ENCODE measurements at regions of chr1 and their contacts with region 1.

Region 1: DNA sequence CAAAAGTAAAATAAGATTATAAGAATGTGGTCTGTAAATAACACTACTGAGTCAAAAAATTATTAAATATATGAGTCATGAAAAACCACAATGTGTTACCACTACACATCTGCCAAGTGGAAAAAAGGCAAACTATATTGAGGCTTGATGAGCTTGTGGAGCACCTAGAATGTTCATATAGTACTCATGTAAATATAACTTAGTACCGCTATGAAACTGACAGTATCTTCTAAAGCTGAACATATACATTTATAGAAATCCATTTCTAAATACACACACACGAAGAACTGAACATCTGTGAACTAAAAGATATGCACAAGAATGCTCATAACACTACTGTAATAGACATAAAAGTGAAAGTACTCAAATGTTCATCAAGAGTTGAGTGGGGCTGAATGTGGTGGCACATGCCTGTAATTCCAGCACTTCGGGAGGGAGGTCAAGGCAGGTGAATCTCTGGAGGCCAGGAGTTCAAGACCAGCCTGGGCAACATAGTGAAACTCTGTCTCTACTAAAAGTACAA is 18.5 kb upstream of the GBP3 start:
- DNase-seq: peak; percentile 63
- H3K4me3 Mint-ChIP-seq: peak overlapping the region; percentile 25
- H3K27ac Mint-ChIP-seq: peak overlapping the region; percentile 72
- H3K4me1 Mint-ChIP-seq: peaks cover 33% of the 10 kb centered on the region
- H3K27me3 Mint-ChIP-seq: peaks cover 11% of the 10 kb centered on the region

Region 2: DNA sequence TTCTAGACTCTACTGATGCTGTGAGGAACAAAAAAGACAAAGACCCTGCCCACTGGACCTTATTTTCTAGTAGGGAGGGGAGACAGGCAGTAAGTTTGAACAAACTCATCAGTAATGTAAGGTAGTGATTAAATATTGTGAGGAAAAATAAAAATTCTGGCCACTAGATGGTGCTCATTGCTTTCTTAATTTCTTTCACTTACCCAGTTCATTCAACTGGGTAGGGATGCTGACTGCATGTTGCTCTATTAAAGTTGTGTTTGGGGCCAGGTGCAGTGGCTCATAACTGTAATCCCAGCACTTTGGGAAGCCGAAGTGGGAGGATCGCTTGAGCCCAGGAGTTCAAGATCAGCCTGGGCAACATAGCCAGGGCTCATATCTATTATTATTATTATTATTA is 42.5 kb before region 1 on chr1:
- CTCF ChIA-PET with region 1: interaction called, 5 read pairs
- intact Hi-C with region 1: loop called (anchors 1 kb)
- DNase-seq: peak; percentile 33
- H3K4me3 Mint-ChIP-seq: no peak overlapping the region
- H3K27ac Mint-ChIP-seq: no peak overlapping the region
- H3K4me1 Mint-ChIP-seq: peaks cover 27% of the 10 kb centered on the region
- H3K27me3 Mint-ChIP-seq: peaks cover 4% of the 10 kb centered on the region

Region 3: DNA sequence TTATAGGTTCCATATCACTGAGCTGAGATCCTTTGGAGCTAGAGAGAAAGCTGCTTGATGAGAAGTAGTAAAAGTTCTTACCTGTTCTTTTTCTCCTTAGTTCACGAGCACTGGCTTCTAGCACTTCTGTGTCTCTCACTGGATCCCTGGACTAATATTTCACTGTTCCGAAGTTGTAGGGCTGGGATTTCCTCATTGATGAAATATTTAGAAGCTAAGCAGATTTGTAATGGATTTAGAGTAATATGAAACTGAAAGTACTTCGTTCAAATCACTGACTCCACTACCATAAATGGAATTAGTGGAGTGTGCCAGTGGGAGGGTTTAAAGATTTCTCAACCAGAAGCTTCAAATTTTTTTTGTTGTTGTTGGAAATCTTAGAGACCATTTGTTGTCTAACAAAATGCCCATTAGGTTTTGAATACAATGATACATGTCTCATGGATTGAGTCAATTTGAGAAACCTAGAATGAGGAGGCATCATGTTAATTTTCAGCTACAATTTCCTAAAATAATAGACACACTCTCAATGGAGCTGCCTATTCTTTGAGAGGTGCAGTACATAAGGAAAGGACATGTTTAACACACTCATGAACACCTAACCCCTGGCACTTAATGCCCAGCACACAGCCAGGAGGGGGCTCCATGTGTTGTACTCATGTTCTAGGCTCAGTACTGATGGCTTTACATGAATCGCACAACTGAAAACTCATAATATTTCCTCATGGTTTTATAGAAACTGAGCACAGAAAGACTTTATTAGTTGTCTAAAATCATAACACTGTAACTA is 24.1 kb after region 1 on chr1 and contains the start of gene GBP1:
- CTCF ChIA-PET with region 1: interaction called, 6 read pairs
- intact Hi-C with region 1: loop called (anchors 1 kb)
- DNase-seq: no peak
- H3K4me3 Mint-ChIP-seq: peak within 1 kb of the TSS; percentile 75
- H3K27ac Mint-ChIP-seq: peak within 1 kb of the TSS; percentile 89
- H3K4me1 Mint-ChIP-seq: peaks cover 53% of the 10 kb centered on the region
- H3K27me3 Mint-ChIP-seq: no peaks in the 10 kb centered on the region
- total RNA-seq, gene GBP1: 48.2 to 52.8 TPM

Region 4: GRCh38 chr1:89298461-89298860 is 257.3 kb after region 1 on chr1:
- CTCF ChIA-PET with region 1: interaction called, 4 read pairs
- intact Hi-C with region 1: loop called (anchors 1 kb)
- DNase-seq: no peak
- H3K4me3 Mint-ChIP-seq: no peak overlapping the region
- H3K27ac Mint-ChIP-seq: no peak overlapping the region
- H3K4me1 Mint-ChIP-seq: peaks cover 55% of the 10 kb centered on the region
- H3K27me3 Mint-ChIP-seq: no peaks in the 10 kb centered on the region